Adrenal gland (tissue), 19 donors: ENCODE measurements at regions of chr16 and their contacts with region 1.

Region 1: DNA sequence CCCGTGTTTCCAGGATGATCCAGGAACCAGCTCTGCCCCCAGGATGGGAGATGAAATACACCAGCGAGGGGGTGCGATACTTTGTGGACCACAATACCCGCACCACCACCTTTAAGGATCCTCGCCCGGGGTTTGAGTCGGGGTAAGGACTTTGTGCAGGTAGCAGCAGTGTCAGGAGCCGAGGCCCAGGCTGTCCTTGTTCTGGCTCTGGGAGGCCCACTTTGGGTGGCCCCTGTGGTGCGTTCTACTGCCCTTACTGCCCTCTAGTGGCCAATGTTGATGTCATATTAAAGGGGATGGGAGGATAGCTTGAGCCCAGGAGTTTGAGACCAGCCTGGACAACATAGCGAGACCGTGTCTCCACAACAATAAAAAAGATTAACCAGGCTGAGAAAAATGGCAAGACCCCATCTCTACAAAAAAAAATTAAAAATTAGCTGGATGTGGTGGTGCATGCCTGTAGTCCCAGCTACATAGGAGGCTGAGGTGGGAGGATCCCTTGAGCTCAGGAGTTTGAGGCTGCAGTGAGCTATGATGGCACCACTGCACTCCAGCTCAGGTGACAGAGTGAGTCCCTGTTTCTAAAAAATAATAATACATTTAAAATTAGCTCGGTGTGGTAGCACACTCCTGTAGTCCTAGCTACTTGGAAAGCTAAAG is 20.9 kb upstream of the CLEC18A start:
- DNase-seq: peak; percentile 56 to 78 (median 67)
- H3K4me3 ChIP-seq: no peak overlapping the region
- H3K27ac ChIP-seq: no peak overlapping the region
- H3K4me1 ChIP-seq: peaks cover 11 to 16% of the 10 kb centered on the region in 2 donors
- H3K27me3 ChIP-seq: no peaks in the 10 kb centered on the region
- CTCF ChIP-seq: peak; percentile 66 to 82 (median 74)
- POLR2A ChIP-seq: no peak

Region 2: GRCh38 chr16:69796351-69797118 is 133.7 kb before region 1 on chr16:
- intact Hi-C with region 1: loop called (anchors 5 kb)
- DNase-seq: peak in 6 of 7 donors; percentile 40 to 71 (median 56)
- H3K4me3 ChIP-seq: peak overlapping the region in 1 of 4 donors; percentile 13
- H3K27ac ChIP-seq: no peak overlapping the region
- H3K4me1 ChIP-seq: peaks cover 4 to 8% of the 10 kb centered on the region in 2 donors
- H3K27me3 ChIP-seq: no peaks in the 10 kb centered on the region
- CTCF ChIP-seq: peak; percentile 89 to 95 (median 94)
- POLR2A ChIP-seq: no peak

Region 3: GRCh38 chr16:69823831-69824563 is 106.2 kb before region 1 on chr16:
- intact Hi-C with region 1: no loop called
- DNase-seq: peak; percentile 56 to 88 (median 79)
- H3K4me3 ChIP-seq: no peak overlapping the region
- H3K27ac ChIP-seq: peak overlapping the region; percentile 78 to 88 (median 80)
- H3K4me1 ChIP-seq: peaks cover 13 to 22% of the 10 kb centered on the region in 2 donors
- H3K27me3 ChIP-seq: no peaks in the 10 kb centered on the region
- CTCF ChIP-seq: no peak
- POLR2A ChIP-seq: peak in 1 of 2 donors; percentile 64

Region 4: DNA sequence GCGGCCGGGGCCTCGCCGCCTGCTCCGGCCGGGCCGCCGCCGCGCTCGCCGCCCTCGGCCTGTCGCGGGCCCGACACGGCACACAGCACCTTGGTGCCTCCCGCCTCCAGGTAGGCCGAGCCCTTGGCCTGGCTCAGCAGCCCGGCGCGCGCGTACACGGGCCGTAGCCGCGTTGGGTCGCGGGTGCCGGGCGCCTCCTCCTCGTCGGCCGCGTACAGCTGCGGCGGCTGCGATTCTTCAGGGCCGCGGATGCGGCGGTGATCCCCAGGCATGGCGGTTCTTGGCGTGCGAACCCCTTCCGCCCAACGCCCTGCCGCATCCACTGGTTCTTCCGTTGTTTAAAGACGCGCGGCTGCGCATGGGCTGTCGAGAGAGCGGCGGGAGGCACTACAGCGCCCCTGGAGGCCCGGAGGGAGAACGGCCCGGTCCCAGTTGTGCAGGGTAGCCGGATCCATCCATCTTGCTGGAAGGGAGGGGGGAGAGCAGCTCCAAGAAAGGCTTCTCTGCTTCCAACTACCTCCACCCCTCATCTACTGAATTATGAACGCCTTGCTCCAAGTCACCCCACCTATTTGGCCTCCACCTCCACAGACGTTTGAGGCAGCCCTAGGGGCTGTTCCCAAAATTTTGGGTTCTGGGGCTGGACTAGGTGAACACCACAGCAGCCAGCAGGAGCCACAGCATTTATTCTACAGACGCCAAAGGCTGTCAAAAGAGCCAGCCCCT is 321.5 kb after region 1 on chr16 and contains the start of gene EXOSC6:
- intact Hi-C with region 1: no loop called
- DNase-seq: peak; percentile 89 to 94 (median 92)
- H3K4me3 ChIP-seq: peak within 1 kb of the TSS in 2 of 4 donors; percentile 43 to 97
- H3K27ac ChIP-seq: peak within 1 kb of the TSS in 4 of 5 donors; percentile 80 to 99 (median 85)
- H3K4me1 ChIP-seq: peaks cover 12 to 23% of the 10 kb centered on the region in 2 donors
- H3K27me3 ChIP-seq: no peaks in the 10 kb centered on the region
- CTCF ChIP-seq: peak; percentile 87 to 95 (median 92)
- POLR2A ChIP-seq: peak; percentile 77 to 86
- total RNA-seq, gene EXOSC6: 17.3 to 49.6 (median 30.3) TPM